Panc1 (cell line): ENCODE measurements at regions of chr16 and their contacts with region 1.

Region 1: GRCh38 chr16:50354629-50355456 is 13.9 kb downstream of the BRD7 start:
- DNase-seq: no peak
- ATAC-seq: no peak
- H3K4me3 ChIP-seq: no peak overlapping the region
- H3K27ac ChIP-seq: no peak overlapping the region
- H3K4me1 ChIP-seq: no peaks in the 10 kb centered on the region
- H3K27me3 ChIP-seq: no peaks in the 10 kb centered on the region
- CTCF ChIP-seq: peak; percentile 65

Region 2: DNA sequence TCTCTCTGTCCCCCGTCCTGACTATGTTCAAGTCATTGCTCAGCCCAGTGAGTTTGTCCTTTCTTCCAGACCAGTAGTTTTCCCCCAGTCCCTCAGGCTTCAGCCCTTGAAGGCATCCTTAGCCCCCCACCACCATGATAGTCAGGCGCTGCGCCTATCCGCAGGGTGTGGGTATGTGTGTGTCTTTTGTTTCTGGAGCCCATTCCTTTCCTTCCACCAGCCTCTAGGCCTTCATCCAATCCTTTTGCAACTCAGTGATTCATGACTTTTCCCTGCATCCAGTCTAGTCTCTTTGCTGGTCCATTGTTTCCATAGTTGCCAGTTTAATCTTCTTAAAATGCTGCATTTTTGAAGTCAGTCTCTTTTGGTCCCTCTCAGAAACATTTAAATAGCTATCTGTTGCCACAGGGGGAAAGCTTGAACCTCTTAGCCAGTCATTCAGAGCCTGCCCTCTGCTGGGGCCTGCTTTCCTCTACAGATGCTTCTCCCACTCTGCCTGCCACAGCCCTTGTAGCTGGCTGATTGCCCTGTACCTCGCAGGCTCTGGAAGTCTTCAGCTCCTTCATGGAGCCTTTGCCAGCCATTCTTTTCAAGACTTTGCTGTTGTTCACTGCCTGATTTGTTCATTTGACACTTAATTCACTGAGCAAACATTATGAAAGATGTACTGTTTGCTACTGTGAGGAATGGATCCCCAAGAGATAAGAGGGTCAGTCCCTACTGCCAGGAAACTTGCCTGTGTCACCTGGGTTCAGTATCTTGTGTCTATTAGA is 144.4 kb before region 1 on chr16:
- CTCF ChIA-PET with region 1: interaction called, 3 read pairs
- POLR2A ChIA-PET with region 1: no interaction called
- in situ Hi-C with region 1: no loop called
- intact Hi-C with region 1: loop called (anchors 10 kb)
- DNase-seq: peak; percentile 32
- ATAC-seq: peak; percentile 92
- H3K4me3 ChIP-seq: no peak overlapping the region
- H3K27ac ChIP-seq: no peak overlapping the region
- H3K4me1 ChIP-seq: no peaks in the 10 kb centered on the region; the same call in 1 of the 2 replicates
- H3K27me3 ChIP-seq: no peaks in the 10 kb centered on the region
- CTCF ChIP-seq: peak; percentile 68